Vagina (tissue), 2 donors: ENCODE measurements at regions of chr1 and their contacts with region 1.

Region 1: DNA sequence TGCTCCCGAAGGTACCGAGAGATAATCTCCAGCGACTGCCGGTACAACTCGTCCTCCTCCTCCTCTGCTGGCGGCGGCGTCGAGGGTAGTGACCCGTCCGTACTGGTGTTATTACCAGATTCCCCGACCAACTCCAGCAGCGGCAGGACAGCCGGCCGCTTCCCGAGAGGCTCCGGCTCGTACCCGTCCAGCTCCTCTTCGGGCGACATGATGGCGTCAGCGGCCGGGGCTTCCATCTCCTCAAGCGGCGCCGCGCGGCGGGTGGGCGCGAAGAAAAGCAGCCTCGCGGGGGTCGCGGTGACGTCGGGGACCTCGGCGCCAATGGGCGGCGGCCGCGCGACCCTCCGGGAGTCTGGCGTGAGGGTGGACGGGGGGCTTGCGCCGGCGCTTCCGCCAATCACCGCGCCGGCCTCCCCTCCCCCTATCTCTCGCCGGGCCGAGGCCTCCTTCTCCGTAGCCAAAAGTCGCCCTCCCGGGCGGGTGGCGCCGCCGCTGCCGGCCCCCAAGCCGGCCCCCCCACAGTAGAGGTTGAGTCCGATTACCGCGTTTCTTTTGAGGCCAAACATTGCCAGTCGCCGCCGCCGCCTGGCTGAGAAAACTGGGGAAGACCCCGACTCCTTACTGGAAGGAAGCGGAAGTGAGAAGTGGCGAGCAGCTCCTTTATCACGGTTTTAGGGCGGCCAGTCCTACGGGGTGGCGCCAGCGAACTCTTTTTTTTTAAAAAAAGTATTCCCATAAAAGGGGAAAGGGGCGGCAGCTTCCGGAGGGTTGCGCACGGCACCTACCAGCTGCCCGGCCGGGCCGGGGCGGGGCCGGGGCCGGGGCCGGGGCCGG is at the start of gene MCL1:
- DNase-seq: peak in 1 of 2 donors; percentile 97
- H3K4me3 ChIP-seq: peak within 1 kb of the TSS; percentile 86 to 99
- H3K27ac ChIP-seq: peak within 1 kb of the TSS; percentile 100
- H3K4me1 ChIP-seq: peaks cover 30% of the 10 kb centered on the region
- H3K27me3 ChIP-seq: no peaks in the 10 kb centered on the region
- CTCF ChIP-seq: no peak
- POLR2A ChIP-seq: peak; percentile 52 to 97
- total RNA-seq, gene MCL1: 181 TPM

Region 2: GRCh38 chr1:150537732-150538684 is 41.2 kb before region 1 on chr1:
- intact Hi-C with region 1: no loop called
- DNase-seq: no peak
- H3K4me3 ChIP-seq: no peak overlapping the region
- H3K27ac ChIP-seq: peak overlapping the region; percentile 71
- H3K4me1 ChIP-seq: peaks cover 33% of the 10 kb centered on the region
- H3K27me3 ChIP-seq: no peaks in the 10 kb centered on the region
- CTCF ChIP-seq: no peak
- POLR2A ChIP-seq: no peak

Region 3: GRCh38 chr1:150619576-150620509 is 40.7 kb after region 1 on chr1:
- intact Hi-C with region 1: loop called (anchors 5 kb)
- DNase-seq: no peak
- H3K4me3 ChIP-seq: no peak overlapping the region
- H3K27ac ChIP-seq: peak overlapping the region; percentile 53
- H3K4me1 ChIP-seq: peaks cover 53% of the 10 kb centered on the region
- H3K27me3 ChIP-seq: no peaks in the 10 kb centered on the region
- CTCF ChIP-seq: peak in 1 of 3 experiments; percentile 4
- POLR2A ChIP-seq: no peak